Heart left ventricle (tissue), 16 donors: ENCODE measurements at regions of chr2 and their contacts with region 1.

Region 1: DNA sequence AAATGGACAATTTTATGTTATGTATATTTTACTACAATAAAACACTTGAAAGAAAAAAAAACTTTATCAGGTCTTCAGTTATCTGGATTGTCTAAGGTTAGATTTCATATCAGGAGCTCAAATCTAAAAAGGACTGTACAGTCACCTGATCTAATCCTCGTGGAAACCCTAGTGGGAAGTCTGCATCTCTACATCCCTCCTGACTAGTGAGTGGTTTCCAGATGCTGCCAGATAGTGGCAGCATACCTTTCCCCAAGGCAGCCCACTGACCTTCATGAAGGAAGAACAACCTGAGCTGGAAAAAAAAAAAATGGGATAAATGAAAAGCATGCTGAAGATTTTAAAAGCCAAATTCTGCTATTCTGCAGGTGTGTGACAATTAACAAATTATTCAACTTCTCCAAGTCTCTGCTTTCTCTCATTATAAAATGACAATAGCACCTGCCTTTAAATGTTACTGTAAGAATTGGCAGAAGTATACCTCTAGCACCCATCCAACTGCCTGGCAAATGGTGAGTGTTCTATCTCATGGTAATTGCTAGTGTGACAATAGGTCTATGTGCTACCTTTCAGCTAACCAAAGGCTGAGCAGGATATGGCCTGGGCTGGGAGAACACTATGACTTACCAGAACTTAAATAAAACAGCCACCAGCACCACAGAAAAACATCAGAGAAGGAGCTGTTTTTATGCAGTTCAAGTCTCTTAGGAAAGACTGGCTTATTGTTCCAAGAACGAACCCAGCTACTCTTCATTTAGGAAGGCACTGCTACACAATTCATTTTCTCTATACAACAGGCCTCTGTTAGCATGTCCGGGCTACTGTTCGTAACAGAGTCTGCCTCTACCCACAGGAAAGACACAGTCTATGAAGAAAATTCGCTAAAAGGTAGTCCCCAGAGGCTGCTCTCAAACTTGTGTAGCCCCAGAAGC is 8.6 kb downstream of the CLASP1 start:
- DNase-seq: no peak
- ATAC-seq: peak in 1 of 4 donors; percentile 38
- H3K4me3 ChIP-seq: no peak overlapping the region
- H3K27ac ChIP-seq: peak overlapping the region in 4 of 12 donors; percentile 7 to 37 (median 22)
- H3K4me1 ChIP-seq: peaks cover 0 to 50% (median 23%) of the 10 kb centered on the region in 12 donors
- H3K27me3 ChIP-seq: no peaks in the 10 kb centered on the region
- CTCF ChIP-seq: no peak
- POLR2A ChIP-seq: no peak

Region 2: DNA sequence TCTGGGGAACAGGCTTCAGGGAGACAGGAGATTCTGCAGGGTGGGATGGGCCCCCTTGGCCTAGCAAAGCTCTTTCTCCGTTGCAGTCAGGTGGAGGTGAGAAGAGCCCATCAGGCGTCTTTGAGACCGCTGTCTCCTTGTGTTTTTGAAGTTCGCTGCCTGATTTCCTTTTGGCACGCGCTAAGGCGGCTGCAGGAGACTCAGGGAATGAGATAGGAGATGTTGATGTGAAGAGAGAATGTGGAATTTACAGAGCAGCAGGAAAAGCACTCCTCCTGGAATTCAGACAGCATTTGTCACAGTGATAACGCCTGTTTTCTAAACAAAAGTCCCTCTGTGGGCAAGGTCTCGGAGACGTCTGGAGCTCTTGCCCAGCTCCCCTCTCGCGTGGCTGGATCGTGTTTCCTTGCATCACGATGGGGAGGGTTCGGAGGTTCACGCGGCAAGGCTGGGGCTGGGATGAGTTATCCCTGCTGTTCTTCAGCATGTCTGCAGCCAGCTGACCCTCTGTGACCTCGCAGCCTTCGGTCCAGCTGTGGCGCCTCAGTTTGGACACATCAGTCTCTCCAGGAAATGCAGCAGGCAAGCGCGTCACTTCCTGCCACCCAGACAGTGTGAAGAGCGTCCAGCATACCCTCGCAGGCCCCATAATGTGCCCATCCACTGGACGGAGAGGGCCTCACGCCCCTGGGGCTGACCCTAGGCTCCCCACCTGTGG is 874.8 kb before region 1 on chr2:
- intact Hi-C with region 1: no loop called
- DNase-seq: peak; percentile 86 to 94 (median 91)
- ATAC-seq: peak; percentile 74 to 91 (median 88)
- H3K4me3 ChIP-seq: peak overlapping the region in 1 of 12 donors; percentile 6
- H3K27ac ChIP-seq: peak overlapping the region; percentile 40 to 94 (median 67)
- H3K4me1 ChIP-seq: peaks cover 0 to 38% (median 14%) of the 10 kb centered on the region in 12 donors
- H3K27me3 ChIP-seq: no peaks in the 10 kb centered on the region
- CTCF ChIP-seq: no peak
- POLR2A ChIP-seq: no peak

Region 3: GRCh38 chr2:121596221-121597080 is 44.2 kb before region 1 on chr2:
- intact Hi-C with region 1: loop called in 7 of 10 experiments (anchors 5 kb)
- DNase-seq: peak in 1 of 5 donors; percentile 31
- ATAC-seq: peak; percentile 50 to 81 (median 72)
- H3K4me3 ChIP-seq: peak overlapping the region in 8 of 12 donors; percentile 4 to 37 (median 25)
- H3K27ac ChIP-seq: peak overlapping the region; percentile 25 to 82 (median 58)
- H3K4me1 ChIP-seq: peaks cover 0 to 50% (median 27%) of the 10 kb centered on the region in 12 donors
- H3K27me3 ChIP-seq: no peaks in the 10 kb centered on the region
- CTCF ChIP-seq: peak; percentile 25 to 75 (median 56)
- POLR2A ChIP-seq: no peak